Ascending aorta (tissue), 2 donors: ENCODE measurements at regions of chr7 and their contacts with region 1.

Region 1: GRCh38 chr7:30284298-30285066 is at the start of gene ZNRF2:
- DNase-seq: peak; percentile 99 to 100
- H3K4me3 ChIP-seq: peak within 1 kb of the TSS; percentile 77 to 84
- H3K27ac ChIP-seq: peak within 1 kb of the TSS; percentile 99
- H3K4me1 ChIP-seq: peaks cover 0 to 14% of the 10 kb centered on the region in 2 donors
- H3K27me3 ChIP-seq: no peaks in the 10 kb centered on the region
- CTCF ChIP-seq: peak; percentile 15 to 66 (median 57)
- total RNA-seq, gene ZNRF2: 31.7 TPM

Region 2: DNA sequence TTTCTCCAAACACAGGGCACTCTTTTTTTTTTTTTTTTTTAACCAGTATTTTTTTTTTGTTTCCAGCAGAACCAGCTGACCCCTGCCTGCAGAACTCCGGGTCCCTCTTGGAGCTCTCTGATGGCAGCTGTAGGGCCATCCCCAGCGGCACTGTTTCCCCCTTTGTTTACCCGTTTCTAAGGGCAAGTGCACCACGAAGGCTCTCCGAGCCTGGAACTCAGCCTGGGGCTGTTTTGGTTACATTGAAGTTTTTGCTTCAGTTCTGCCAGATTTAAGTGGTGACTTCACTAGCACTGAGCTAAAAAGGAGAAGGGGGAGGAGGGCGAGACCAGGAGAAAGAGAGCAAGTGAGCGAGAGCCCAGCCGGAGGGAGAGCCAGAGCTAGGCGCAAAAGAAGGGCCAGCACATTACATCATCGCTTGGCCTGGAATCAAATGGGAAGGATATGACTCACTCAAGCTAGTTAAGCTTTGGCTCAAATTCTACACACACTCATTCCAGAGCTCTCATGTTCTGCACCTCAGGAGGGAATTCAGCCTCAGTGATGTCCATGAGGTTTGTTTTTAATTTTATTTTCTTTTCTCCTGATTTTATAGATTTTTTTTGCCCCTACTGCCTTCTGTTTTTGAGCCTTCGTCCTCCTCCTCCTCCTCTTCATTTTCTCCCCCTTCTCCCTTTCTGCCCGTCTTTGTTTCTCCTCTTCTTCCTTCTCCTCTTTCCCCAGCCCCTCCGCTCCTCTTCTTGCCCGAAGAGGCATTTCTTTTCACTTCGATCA is 1598.7 kb before region 1 on chr7:
- intact Hi-C with region 1: loop called (anchors 10 kb)
- DNase-seq: peak; percentile 88 to 99
- H3K4me3 ChIP-seq: peak overlapping the region; percentile 27 to 66
- H3K27ac ChIP-seq: peak overlapping the region; percentile 80 to 92
- H3K4me1 ChIP-seq: peaks cover 4 to 14% of the 10 kb centered on the region in 2 donors
- H3K27me3 ChIP-seq: no peaks in the 10 kb centered on the region
- CTCF ChIP-seq: no peak

Region 3: GRCh38 chr7:29968683-29969395 is 315.6 kb before region 1 on chr7:
- intact Hi-C with region 1: no loop called
- DNase-seq: no peak
- H3K4me3 ChIP-seq: no peak overlapping the region
- H3K27ac ChIP-seq: no peak overlapping the region
- H3K4me1 ChIP-seq: peaks cover 0 to 3% of the 10 kb centered on the region in 2 donors
- H3K27me3 ChIP-seq: no peaks in the 10 kb centered on the region
- CTCF ChIP-seq: no peak

Region 4: DNA sequence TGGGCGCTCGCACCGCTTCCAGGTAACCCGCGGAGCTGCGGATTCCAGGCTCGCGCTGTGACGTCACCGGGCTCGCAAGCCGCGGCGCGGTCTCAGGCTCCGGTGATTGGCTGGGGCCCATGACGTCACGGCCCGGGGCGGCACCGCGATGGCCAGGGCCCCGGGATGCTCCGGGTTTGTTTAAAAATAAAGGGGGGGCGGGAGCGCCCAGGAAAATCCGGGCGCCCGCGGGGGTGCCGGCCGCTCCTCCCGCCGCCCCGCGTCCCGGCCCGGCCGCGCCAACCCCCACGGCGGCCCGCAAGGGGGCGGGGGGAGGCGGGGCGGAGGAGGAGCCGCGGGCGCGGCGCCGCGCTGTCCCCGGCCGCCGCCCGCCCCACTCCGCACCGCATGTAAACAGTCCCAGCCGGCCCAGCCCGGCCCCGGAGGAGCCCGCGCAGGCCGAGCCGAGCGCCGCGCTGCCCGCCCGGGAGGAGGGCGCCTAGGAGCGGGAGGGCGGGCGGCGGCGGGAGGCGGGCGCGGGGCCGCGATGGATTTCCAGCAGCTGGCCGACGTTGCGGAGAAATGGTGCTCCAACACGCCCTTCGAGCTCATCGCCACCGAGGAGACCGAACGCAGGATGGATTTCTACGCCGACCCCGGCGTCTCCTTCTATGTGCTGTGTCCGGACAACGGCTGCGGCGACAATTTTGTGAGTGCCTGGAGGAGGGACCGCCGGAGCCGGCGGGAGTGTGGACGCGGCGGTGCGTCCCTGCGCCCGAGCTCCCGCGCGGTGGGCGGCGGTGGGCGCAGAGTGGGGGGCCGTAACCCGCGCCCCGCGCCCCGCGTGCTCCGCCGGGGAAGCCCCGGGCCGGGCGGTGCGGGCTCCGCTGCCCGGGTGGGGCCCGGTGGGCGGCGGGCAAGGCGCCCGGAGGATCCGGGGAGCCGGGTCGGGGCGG is 149.6 kb before region 1 on chr7 and contains the start of gene MTURN:
- intact Hi-C with region 1: loop called (anchors 1 kb)
- DNase-seq: peak; percentile 56 to 94
- H3K4me3 ChIP-seq: peak within 1 kb of the TSS; percentile 84 to 85
- H3K27ac ChIP-seq: peak within 1 kb of the TSS; percentile 89 to 96
- H3K4me1 ChIP-seq: peaks cover 9 to 13% of the 10 kb centered on the region in 2 donors
- H3K27me3 ChIP-seq: no peaks in the 10 kb centered on the region
- CTCF ChIP-seq: peak in 1 of 3 experiments; percentile 10
- total RNA-seq, gene MTURN: 40.9 TPM

Region 5: DNA sequence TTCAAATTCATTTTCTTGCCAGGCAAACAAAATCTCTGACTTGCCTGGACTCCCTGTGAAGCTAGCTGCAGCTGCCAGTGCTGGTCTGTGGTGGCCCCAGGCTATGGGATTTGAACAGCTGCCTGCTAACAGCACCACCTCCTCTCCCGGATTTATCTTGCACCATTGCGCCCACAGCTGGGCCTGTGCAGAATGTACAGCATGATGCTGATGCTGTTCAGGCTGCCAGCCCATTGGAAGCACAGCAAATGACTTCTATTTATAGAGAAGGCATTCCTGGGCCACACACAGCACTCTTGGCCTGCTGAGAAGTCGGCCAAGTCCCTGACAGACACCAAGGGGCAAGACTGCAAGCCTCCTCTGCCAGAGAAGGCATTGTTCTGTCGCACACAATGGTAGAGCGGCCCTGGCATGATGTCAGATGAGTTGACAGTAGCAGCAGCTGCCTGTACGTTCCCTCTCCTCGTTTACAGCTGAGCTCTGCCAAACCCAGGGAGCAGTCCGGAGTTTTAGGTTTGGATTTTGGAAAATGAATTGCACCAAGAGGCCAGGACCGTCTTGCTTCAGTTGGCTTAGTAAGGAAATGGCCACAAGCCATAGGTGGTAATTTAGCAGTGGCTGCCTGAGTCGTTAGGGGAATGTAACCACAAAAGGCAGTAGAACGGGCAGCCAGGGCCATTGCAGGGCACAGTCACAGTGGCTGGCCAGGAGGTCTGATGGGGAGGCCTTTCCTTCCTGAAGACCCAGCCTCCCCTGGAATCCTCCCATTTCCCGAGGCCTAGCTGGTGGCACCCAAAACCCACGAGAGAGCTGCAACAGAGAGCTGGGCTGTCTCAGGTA is 111.2 kb before region 1 on chr7:
- intact Hi-C with region 1: loop called (anchors 2 kb)
- DNase-seq: peak; percentile 40 to 90
- H3K4me3 ChIP-seq: peak overlapping the region in 1 of 2 donors; percentile 34
- H3K27ac ChIP-seq: peak overlapping the region; percentile 66 to 86
- H3K4me1 ChIP-seq: peaks cover 32 to 69% of the 10 kb centered on the region in 2 donors
- H3K27me3 ChIP-seq: no peaks in the 10 kb centered on the region
- CTCF ChIP-seq: peak in 1 of 3 experiments; percentile 35

Region 6: GRCh38 chr7:30308389-30308788 is 23.9 kb after region 1 on chr7:
- intact Hi-C with region 1: no loop called
- DNase-seq: no peak
- H3K4me3 ChIP-seq: no peak overlapping the region
- H3K27ac ChIP-seq: no peak overlapping the region
- H3K4me1 ChIP-seq: no peaks in the 10 kb centered on the region
- H3K27me3 ChIP-seq: no peaks in the 10 kb centered on the region
- CTCF ChIP-seq: no peak

Region 7: GRCh38 chr7:30504347-30505173 is 220.1 kb after region 1 on chr7 and contains the start of gene GGCT:
- intact Hi-C with region 1: loop called (anchors 1 kb)
- DNase-seq: peak; percentile 99 to 100
- H3K4me3 ChIP-seq: peak within 1 kb of the TSS; percentile 88 to 95
- H3K27ac ChIP-seq: peak within 1 kb of the TSS; percentile 88 to 93
- H3K4me1 ChIP-seq: peaks cover 2 to 6% of the 10 kb centered on the region in 2 donors
- H3K27me3 ChIP-seq: no peaks in the 10 kb centered on the region
- CTCF ChIP-seq: no peak
- total RNA-seq, gene GGCT: 0.43 TPM